Activated CD8-positive, alpha-beta memory T cell treated with anti-CD3 and anti-CD28 coated beads, Interleukin-2, amount 10 ng/mL, durations not matched to agents 7 days and 5 days (primary cell): ENCODE measurements at regions of chr1 and their contacts with region 1.

Region 1: DNA sequence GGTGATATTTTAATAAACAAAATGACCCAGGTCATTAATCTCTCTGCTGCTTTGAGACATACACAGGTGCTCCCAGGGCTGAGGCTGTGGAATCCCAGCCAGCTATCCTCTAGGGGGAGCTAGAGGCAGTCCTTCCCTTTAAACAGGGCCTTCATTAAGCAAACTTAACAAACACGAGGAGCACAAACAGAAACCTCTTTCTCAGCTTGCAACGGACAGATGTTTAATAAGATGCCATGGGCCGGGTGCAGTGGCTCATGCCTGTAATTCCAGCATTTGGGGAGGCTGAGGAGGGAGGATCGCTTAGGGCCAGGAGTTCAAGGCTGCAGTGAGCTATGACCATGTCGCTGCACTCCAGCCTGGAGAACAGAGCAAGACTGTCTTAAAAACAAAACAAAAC is 106.7 kb downstream of the HIVEP3 start:
- DNase-seq: peak; percentile 80
- ATAC-seq: peak; percentile 66
- H3K4me3 Mint-ChIP-seq: no peak overlapping the region
- H3K27ac Mint-ChIP-seq: peak overlapping the region; percentile 30
- H3K4me1 Mint-ChIP-seq: peaks cover 37% of the 10 kb centered on the region
- H3K27me3 Mint-ChIP-seq: no peaks in the 10 kb centered on the region

Region 2: DNA sequence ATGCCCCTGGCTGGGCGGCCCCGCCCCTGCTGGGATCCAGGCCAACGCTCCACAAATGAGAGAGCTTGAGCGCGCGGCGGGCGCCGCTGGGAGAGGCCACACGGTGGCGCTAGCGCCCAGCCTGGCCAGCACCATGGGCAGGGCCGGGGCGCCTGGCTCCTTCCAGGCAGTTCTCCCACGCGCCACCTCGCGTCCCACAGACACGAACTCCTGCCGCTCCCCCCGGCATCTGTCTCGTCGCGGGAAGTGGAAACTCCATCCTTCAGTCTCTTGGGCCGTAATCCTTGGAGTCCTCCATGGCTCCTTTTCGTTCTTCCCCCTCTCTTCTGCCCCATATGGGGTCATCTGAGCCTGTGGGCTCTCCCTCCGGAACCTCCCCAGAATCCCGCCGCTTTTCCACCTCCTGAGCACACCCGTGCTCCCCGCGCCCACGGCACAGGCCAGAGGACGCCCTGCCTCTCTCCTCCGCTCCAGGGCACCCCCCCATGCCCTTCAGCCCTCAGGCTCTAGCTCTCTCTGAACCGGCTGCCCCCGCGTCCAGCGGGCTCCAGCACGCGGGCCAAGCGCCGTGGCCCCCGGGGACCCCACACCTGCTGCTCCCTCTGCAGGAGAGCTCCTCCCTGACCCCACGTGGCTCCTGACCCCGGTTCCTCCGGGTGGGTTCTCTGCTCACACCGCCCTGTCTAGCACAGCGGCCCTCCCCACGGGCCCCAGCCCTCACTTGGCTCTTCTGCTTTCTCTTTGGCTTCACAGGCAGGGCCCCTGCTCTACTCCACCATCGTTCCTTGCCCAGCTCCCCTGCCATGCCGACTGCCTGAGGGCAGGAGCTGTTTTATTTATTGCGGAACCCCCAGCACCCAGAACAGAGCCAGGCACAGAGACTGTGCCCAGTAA is 295.6 kb before region 1 on chr1:
- CTCF ChIA-PET with region 1: interaction called, 12 read pairs
- DNase-seq: peak; percentile 64
- ATAC-seq: peak; percentile 85
- H3K4me3 Mint-ChIP-seq: no peak overlapping the region
- H3K27ac Mint-ChIP-seq: no peak overlapping the region
- H3K4me1 Mint-ChIP-seq: peaks cover 3% of the 10 kb centered on the region
- H3K27me3 Mint-ChIP-seq: no peaks in the 10 kb centered on the region

Region 3: DNA sequence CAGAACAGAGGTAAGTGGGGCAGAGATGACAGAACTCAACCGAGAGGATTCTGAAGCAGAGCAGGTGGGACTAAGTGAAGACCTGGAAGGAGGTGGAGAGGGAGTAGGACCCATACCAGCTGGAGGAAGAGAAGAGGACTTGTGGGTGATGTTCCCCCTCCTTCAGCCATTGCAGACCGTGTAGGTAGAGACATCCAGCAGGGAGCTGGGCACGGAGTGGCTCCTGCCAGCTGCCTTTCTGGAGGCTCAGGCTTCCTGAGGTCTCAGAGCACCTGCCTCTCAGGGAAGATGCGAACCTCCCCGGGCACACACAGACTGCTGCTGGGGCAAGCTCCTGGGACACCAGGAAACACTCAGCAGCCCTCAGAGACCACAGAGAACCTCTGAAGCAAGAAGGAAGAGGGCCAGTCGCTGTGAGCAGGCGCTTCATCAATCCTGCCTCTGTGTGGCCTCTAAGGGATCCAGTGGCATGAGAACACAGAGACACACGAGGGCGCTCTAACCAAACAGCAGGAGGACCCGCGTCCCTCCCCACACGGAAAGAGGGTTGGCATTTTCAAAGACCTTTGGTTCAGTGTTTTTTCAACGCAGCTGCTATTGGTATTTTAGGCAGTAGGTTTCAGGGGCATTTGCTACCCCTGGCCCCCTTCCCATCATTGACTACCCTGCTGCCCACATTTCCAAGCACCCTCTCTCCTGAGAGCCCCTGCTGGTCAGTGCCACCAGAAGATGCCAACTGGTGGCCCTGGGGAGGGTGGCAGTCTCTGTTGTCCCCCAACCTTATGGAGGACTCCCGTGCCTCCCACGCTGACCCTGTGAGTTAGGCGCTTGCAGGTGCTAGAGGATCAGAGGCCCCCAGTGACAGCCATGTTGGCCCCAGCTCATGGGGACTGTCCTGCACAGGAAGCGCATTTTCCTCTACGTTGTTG is 238.0 kb before region 1 on chr1:
- CTCF ChIA-PET with region 1: interaction called, 65 read pairs
- DNase-seq: peak; percentile 90
- ATAC-seq: peak; percentile 99
- H3K4me3 Mint-ChIP-seq: no peak overlapping the region
- H3K27ac Mint-ChIP-seq: peak overlapping the region; percentile 13
- H3K4me1 Mint-ChIP-seq: peaks cover 18% of the 10 kb centered on the region
- H3K27me3 Mint-ChIP-seq: no peaks in the 10 kb centered on the region

Region 4: DNA sequence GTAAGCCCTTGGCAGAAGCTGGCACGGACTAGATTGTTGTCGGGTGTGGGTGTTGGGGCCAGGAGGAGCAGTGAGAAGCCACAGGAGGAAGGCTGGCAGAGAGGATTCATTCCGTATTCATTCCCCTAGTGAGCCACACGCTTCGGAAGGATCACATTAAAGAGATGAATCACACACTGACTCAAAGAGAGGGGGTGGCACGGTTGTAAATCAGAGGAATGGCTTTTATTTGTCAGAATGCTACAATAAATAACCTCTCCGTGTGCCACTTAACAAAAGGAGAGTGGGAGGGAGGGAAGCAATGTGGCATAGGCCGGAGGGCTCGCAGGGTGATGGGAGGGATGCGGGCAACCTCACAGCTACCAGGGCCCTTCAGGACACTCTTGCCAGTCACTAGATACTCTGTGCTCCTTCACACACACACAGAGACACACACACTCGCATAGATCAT is 28.8 kb before region 1 on chr1:
- CTCF ChIA-PET with region 1: interaction called, 11 read pairs
- DNase-seq: no peak
- ATAC-seq: no peak
- H3K4me3 Mint-ChIP-seq: no peak overlapping the region
- H3K27ac Mint-ChIP-seq: no peak overlapping the region
- H3K4me1 Mint-ChIP-seq: peaks cover 16% of the 10 kb centered on the region
- H3K27me3 Mint-ChIP-seq: peaks cover 2% of the 10 kb centered on the region

Region 5: GRCh38 chr1:41891199-41891896 is 79.3 kb after region 1 on chr1:
- CTCF ChIA-PET with region 1: interaction called, 29 read pairs
- DNase-seq: peak; percentile 79
- ATAC-seq: peak; percentile 91
- H3K4me3 Mint-ChIP-seq: peak overlapping the region; percentile 77
- H3K27ac Mint-ChIP-seq: peak overlapping the region; percentile 94
- H3K4me1 Mint-ChIP-seq: peaks cover 72% of the 10 kb centered on the region
- H3K27me3 Mint-ChIP-seq: no peaks in the 10 kb centered on the region

Region 6: GRCh38 chr1:41939194-41939593 is 127.1 kb after region 1 on chr1:
- CTCF ChIA-PET with region 1: no interaction called
- DNase-seq: no peak
- ATAC-seq: no peak
- H3K4me3 Mint-ChIP-seq: no peak overlapping the region
- H3K27ac Mint-ChIP-seq: no peak overlapping the region
- H3K4me1 Mint-ChIP-seq: peaks cover 17% of the 10 kb centered on the region
- H3K27me3 Mint-ChIP-seq: no peaks in the 10 kb centered on the region

Region 7: GRCh38 chr1:42003443-42003842 is 191.4 kb after region 1 on chr1:
- CTCF ChIA-PET with region 1: no interaction called
- DNase-seq: no peak
- ATAC-seq: no peak
- H3K4me3 Mint-ChIP-seq: no peak overlapping the region
- H3K27ac Mint-ChIP-seq: no peak overlapping the region
- H3K4me1 Mint-ChIP-seq: peaks cover 6% of the 10 kb centered on the region
- H3K27me3 Mint-ChIP-seq: no peaks in the 10 kb centered on the region

Region 8: GRCh38 chr1:42137766-42138165 is 325.7 kb after region 1 on chr1:
- CTCF ChIA-PET with region 1: no interaction called
- DNase-seq: no peak
- ATAC-seq: no peak
- H3K4me3 Mint-ChIP-seq: no peak overlapping the region
- H3K27ac Mint-ChIP-seq: no peak overlapping the region
- H3K4me1 Mint-ChIP-seq: no peaks in the 10 kb centered on the region
- H3K27me3 Mint-ChIP-seq: peaks cover 2% of the 10 kb centered on the region

Region 9: GRCh38 chr1:42173155-42173933 is 361.3 kb after region 1 on chr1:
- CTCF ChIA-PET with region 1: interaction called, 15 read pairs
- DNase-seq: peak; percentile 70
- ATAC-seq: peak; percentile 74
- H3K4me3 Mint-ChIP-seq: no peak overlapping the region
- H3K27ac Mint-ChIP-seq: no peak overlapping the region
- H3K4me1 Mint-ChIP-seq: no peaks in the 10 kb centered on the region
- H3K27me3 Mint-ChIP-seq: no peaks in the 10 kb centered on the region